ENCODE measurements at regions of chr17 and their contacts with region 1.

Region 1: DNA sequence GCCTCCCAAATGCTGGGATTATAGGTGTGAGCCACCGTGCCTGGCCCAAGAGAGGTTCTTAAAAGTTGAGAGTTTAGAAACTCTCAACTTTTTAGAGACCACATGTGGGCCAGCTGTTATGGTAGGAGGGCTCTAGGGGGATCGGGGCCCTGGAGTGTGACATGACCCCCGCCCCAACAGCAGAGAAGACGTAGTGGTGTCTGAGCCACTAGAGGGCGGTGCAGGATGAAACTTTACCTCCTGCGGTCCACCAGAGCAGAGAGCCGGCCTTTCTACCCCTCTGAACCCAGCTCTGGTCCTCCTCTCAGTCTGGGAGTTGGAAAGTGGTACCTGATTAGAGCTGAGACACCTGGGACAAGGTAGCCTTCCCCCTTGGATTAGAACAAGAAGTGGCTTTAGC is 7.4 kb downstream of the CDK5RAP3 start:
- DNase-seq: peak; percentile 54
- ATAC-seq: peak; percentile 95
- H3K4me3 ChIP-seq: no peak overlapping the region
- H3K27ac ChIP-seq: no peak overlapping the region
- H3K4me1 ChIP-seq: no peaks in the 10 kb centered on the region
- H3K27me3 ChIP-seq: no peaks in the 10 kb centered on the region
- CTCF ChIP-seq: peak; percentile 74
- POLR2A ChIP-seq: no peak
- RAD21 ChIP-seq: peak; percentile 86

Region 2: DNA sequence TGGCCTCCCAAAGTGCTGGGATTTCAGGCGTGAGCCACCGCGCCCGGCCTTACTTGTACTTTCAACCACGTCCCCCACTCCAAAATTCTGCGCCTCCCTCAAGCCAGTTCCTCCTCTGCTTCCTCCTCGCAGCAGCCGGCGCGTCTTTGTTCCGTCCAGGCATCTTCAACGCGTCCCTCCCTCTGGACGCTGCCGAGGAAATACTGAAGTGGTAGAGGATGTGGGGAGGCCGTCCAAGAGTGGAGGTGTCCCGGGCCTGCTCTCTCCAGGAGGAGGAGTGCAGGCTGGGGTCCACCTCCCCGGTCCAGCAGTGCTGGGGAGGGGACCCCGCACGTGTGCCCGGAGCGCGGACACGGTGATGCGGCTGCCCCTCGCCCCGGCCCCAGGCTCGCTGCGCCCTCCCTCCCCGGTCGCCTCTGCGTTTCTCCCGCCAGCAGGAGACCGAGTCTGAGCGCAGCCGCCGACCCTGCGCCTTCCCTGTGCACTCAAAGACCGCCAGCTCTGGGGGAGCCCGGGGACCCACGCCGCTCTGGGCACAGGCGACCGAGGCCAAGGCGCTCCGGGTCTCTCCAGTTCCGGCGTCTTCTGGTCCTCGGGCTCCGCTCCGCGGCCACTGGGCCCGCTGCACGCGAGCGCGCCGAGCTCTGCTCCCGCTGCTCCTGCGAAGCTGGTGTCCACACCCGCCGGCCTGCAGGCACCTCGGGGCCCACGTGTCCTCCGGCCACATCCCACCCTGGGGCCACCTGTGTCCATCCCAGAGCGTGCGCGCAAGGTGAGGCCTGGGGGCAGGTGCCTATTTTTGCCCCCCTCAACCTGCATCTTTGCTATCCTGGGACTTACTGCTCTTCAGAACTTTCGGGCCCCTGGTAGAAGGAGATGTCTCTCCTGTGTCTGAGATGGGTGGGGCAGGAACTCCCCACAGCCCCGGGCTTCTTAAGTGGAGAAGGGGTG is 188.4 kb before region 1 on chr17:
- CTCF ChIA-PET with region 1: no interaction called
- POLR2A ChIA-PET with region 1: no interaction called
- dilution Hi-C with region 1: no loop called
- in situ Hi-C with region 1: no loop called
- intact Hi-C with region 1: no loop called
- DNase-seq: peak; percentile 38
- ATAC-seq: peak; percentile 98
- H3K4me3 ChIP-seq: peak overlapping the region; percentile 40
- H3K27ac ChIP-seq: no peak overlapping the region
- H3K4me1 ChIP-seq: no peaks in the 10 kb centered on the region
- H3K27me3 ChIP-seq: peaks cover 53% of the 10 kb centered on the region
- CTCF ChIP-seq: peak; percentile 54
- POLR2A ChIP-seq: no peak
- RAD21 ChIP-seq: peak; percentile 61

Region 3: GRCh38 chr17:47889734-47890529 is 88.4 kb before region 1 on chr17:
- CTCF ChIA-PET with region 1: no interaction called
- POLR2A ChIA-PET with region 1: no interaction called
- dilution Hi-C with region 1: no loop called
- in situ Hi-C with region 1: no loop called
- intact Hi-C with region 1: no loop called
- DNase-seq: peak; percentile 77
- ATAC-seq: peak; percentile 99
- H3K4me3 ChIP-seq: no peak overlapping the region
- H3K27ac ChIP-seq: no peak overlapping the region
- H3K4me1 ChIP-seq: no peaks in the 10 kb centered on the region
- H3K27me3 ChIP-seq: peaks cover under 1% of the 10 kb centered on the region; the same call in 1 of the 2 replicates
- CTCF ChIP-seq: peak; percentile 96
- POLR2A ChIP-seq: peak; percentile 54
- RAD21 ChIP-seq: peak; percentile 99

Region 4: GRCh38 chr17:48016112-48016511 is 37.8 kb after region 1 on chr17:
- CTCF ChIA-PET with region 1: interaction called, 24 read pairs
- POLR2A ChIA-PET with region 1: interaction called, 4 read pairs
- dilution Hi-C with region 1: no loop called
- in situ Hi-C with region 1: loop called (anchors 5 kb)
- intact Hi-C with region 1: loop called (anchors 1 kb)
- DNase-seq: peak; percentile 86
- ATAC-seq: peak; percentile 33
- H3K4me3 ChIP-seq: no peak overlapping the region
- H3K27ac ChIP-seq: no peak overlapping the region
- H3K4me1 ChIP-seq: no peaks in the 10 kb centered on the region; the same call in 1 of the 2 replicates
- H3K27me3 ChIP-seq: peaks cover 13% of the 10 kb centered on the region
- CTCF ChIP-seq: no peak; the same call in 1 of the 2 replicates
- POLR2A ChIP-seq: no peak
- RAD21 ChIP-seq: no peak